Activated CD4-positive, alpha-beta memory T cell treated with anti-CD3 and anti-CD28 coated beads, Interleukin-2, amount 10 ng/mL, durations not matched to agents 7 days and 5 days (primary cell): ENCODE measurements at regions of chr12 and their contacts with region 1.

Region 1: DNA sequence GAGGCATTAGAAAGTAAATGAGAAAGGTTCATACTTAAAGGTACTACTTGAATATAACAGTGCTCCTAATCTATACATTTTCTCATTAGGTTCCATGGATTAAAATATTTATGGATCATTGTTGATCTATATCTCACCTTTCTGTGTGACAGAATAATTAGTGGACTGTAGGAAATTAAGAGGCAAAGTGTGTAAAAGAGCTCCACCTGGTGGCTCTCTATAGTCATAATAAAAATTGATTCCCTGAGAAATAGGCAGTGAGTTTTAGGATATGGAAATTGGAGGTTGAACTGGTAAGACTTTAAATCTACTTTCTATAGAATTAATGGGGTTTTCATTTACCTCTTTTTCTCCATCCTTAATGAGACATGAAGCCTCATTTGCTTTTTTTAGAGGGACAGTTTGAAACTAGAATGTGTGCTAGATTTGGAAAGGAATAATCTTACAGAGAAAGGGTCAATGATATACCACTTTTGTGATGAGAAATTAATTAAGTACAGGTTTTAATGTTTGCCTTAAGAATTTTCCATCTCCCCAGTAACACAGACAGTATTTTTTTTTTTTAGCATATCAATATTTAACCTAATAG is 11.8 kb upstream of the DERA start:
- DNase-seq: no peak
- H3K4me3 Mint-ChIP-seq: no peak overlapping the region
- H3K27ac Mint-ChIP-seq: peak overlapping the region; percentile 37
- H3K4me1 Mint-ChIP-seq: peaks cover 12% of the 10 kb centered on the region
- H3K27me3 Mint-ChIP-seq: no peaks in the 10 kb centered on the region

Region 2: GRCh38 chr12:15590180-15590826 is 309.1 kb before region 1 on chr12:
- CTCF ChIA-PET with region 1: interaction called, 19 read pairs
- POLR2A ChIA-PET with region 1: no interaction called
- DNase-seq: peak; percentile 53
- H3K4me3 Mint-ChIP-seq: peak overlapping the region; percentile 53
- H3K27ac Mint-ChIP-seq: peak overlapping the region; percentile 1
- H3K4me1 Mint-ChIP-seq: peaks cover 11% of the 10 kb centered on the region
- H3K27me3 Mint-ChIP-seq: no peaks in the 10 kb centered on the region

Region 3: GRCh38 chr12:15882118-15882971 is 17.0 kb before region 1 on chr12 and contains the start of gene STRAP:
- CTCF ChIA-PET with region 1: interaction called, 8 read pairs
- POLR2A ChIA-PET with region 1: interaction called, 17 read pairs
- DNase-seq: peak; percentile 97
- H3K4me3 Mint-ChIP-seq: peak within 1 kb of the TSS; percentile 97
- H3K27ac Mint-ChIP-seq: peak within 1 kb of the TSS; percentile 95
- H3K4me1 Mint-ChIP-seq: peaks cover 46% of the 10 kb centered on the region
- H3K27me3 Mint-ChIP-seq: no peaks in the 10 kb centered on the region
- total RNA-seq, gene STRAP: 75.5 to 79.8 TPM

Region 4: DNA sequence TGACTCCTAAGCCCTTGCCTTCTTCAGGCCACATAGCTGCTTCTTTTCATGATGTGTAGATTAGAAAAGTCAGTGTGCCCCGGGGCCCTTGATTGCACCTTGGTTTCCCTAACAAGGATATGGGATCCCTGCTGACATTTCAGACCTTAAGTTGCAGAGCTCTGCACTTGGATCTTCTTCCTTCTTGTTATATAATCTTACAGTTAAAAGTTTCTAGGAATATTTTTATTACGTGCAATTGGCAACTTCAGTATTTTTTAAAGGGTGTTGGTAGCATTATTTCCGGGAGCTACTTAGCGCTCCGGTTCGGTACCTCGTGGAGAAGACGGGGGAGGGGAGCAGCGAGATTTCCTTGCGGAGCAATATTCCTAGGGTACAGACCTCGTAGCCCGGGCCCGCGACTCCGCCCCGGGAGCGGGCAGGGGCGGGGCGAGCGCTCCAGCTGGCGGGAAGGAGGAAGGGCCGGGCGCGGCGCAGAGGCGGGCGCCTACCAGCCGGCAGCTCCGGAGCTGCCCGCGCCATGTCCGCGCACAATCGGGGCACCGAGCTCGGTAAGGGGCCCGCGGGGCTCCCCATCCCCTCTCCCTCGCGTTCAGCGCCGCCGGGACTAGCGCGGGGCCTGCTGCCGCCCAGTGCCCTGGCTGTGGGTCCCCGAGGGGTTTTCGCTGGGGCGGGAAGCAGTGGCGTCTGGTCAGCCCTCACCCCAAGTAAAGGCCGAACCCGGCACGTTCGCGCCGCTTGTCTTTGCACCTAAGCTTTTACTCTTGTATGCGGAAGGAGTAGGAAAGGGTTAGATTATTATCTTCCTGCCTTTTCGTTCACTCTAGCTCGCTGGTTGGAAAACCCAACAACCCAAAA is 11.7 kb after region 1 on chr12 and contains the start of gene DERA:
- CTCF ChIA-PET with region 1: interaction called, 41 read pairs
- POLR2A ChIA-PET with region 1: interaction called, 13 read pairs
- DNase-seq: peak; percentile 60
- H3K4me3 Mint-ChIP-seq: peak within 1 kb of the TSS; percentile 80
- H3K27ac Mint-ChIP-seq: peak within 1 kb of the TSS; percentile 61
- H3K4me1 Mint-ChIP-seq: peaks cover 20% of the 10 kb centered on the region
- H3K27me3 Mint-ChIP-seq: no peaks in the 10 kb centered on the region
- total RNA-seq, gene DERA: 21.3 to 24.4 TPM

Region 5: DNA sequence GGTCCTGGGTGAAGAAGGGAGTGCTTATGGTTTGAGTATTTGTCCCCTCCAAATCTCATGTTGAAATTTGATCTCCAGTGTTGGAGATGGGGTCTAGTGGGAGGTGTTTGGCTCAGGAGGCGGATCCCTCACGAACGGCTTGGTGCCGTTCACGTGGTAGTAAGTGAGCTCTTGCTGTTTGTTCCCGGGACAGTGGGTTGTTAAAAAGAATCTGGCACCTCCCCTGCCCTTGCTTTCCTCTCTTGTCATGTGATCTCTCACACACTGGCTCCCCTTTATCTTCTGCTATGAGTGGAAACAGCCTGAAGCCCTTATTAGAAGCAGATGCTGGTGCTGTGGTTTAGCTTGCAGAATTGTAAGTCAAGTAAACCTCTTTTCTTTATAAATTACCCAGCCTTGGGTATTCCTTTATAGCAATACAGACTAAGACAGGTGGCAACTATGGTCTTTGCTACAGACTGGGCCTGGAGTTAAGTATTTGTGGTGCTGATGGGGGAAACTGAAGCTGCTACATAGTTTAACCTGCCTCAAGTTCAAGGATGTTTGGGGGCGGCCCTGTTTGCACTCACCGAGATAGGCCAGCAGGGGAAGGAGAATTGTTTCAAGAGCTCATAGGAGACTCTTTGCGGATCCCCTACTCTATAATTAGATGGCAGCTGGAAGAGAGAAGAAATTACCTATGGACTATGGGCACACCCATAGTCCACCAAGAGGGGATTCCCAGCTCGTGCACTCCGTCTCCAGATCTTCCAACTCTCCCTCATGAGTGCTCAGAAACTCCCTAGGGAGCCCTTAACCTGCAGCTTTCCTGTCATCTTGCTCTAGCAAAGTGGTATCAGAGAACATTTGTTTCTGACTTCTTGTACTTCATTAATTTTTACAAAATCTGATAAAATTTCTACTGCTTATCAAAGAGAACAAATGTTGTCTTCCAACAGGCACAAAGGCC is 213.5 kb after region 1 on chr12:
- CTCF ChIA-PET with region 1: no interaction called
- POLR2A ChIA-PET with region 1: no interaction called
- DNase-seq: no peak
- H3K4me3 Mint-ChIP-seq: no peak overlapping the region
- H3K27ac Mint-ChIP-seq: no peak overlapping the region
- H3K4me1 Mint-ChIP-seq: no peaks in the 10 kb centered on the region
- H3K27me3 Mint-ChIP-seq: no peaks in the 10 kb centered on the region